Cardiac septum (tissue), 1 donor: ENCODE measurements at regions of chr1 and their contacts with region 1.

Region 1: GRCh38 chr1:216750012-216750627 is 26.9 kb upstream of the ESRRG start:
- DNase-seq: no peak

Region 2: DNA sequence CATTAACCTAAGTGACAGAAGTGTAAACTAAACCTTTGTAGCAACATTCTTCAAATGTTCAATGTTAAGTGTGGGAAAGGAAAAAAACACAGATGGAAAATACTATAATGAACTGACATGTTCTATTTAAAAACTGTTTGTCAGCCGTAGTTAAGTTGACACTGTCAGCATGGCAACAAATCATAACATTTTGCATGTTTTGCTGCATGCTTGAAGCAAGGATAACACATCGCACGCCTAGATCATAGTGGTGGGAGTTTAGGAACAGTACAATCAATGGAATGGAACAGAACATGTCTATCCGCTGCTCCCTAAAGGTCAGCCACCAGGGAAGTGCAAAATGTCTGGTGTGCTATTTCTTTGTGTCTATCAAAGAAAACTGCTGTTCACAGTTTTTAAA is 35.6 kb after region 1 on chr1:
- intact Hi-C with region 1: no loop called
- DNase-seq: no peak

Region 3: GRCh38 chr1:216815260-216816131 is 65.4 kb after region 1 on chr1:
- intact Hi-C with region 1: loop called (anchors 10 kb)
- DNase-seq: no peak

Region 4: GRCh38 chr1:217078078-217078690 is 328.1 kb after region 1 on chr1:
- intact Hi-C with region 1: loop called (anchors 5 kb)
- DNase-seq: no peak

Region 5: GRCh38 chr1:217089361-217090014 is 339.4 kb after region 1 on chr1:
- intact Hi-C with region 1: loop called (anchors 5 kb)
- DNase-seq: no peak

Region 6: GRCh38 chr1:217134857-217135568 is 384.9 kb after region 1 on chr1:
- intact Hi-C with region 1: loop called (anchors 5 kb)
- DNase-seq: no peak

Region 7: GRCh38 chr1:217333939-217334338 is 583.8 kb after region 1 on chr1:
- intact Hi-C with region 1: loop called (anchors 5 kb)
- DNase-seq: no peak